ENCODE measurements at regions of chr12 and their contacts with region 1.

Region 1: GRCh38 chr12:9869307-9870161 is at the start of gene CLEC2B:
- DNase-seq: peak in 7 of 9 donors; percentile 54 to 71 (median 58)
- ATAC-seq: peak; percentile 83
- H3K4me3 ChIP-seq: peak within 1 kb of the TSS; percentile 68
- H3K4me3 Mint-ChIP-seq: peak within 1 kb of the TSS; percentile 87 to 99 (median 93)
- H3K27ac ChIP-seq: peak within 1 kb of the TSS; percentile 94
- H3K27ac Mint-ChIP-seq: peak within 1 kb of the TSS; percentile 97 to 100 (median 99)
- H3K4me1 ChIP-seq: peaks cover 7 to 14% of the 10 kb centered on the region in 2 donors
- H3K4me1 Mint-ChIP-seq: peaks cover 7 to 44% (median 29%) of the 10 kb centered on the region in 7 donors
- H3K27me3 ChIP-seq: no peaks in the 10 kb centered on the region
- H3K27me3 Mint-ChIP-seq: no peaks in the 10 kb centered on the region
- total RNA-seq, gene CLEC2B: 50.1 to 86.8 (median 73.8) TPM

Region 2: DNA sequence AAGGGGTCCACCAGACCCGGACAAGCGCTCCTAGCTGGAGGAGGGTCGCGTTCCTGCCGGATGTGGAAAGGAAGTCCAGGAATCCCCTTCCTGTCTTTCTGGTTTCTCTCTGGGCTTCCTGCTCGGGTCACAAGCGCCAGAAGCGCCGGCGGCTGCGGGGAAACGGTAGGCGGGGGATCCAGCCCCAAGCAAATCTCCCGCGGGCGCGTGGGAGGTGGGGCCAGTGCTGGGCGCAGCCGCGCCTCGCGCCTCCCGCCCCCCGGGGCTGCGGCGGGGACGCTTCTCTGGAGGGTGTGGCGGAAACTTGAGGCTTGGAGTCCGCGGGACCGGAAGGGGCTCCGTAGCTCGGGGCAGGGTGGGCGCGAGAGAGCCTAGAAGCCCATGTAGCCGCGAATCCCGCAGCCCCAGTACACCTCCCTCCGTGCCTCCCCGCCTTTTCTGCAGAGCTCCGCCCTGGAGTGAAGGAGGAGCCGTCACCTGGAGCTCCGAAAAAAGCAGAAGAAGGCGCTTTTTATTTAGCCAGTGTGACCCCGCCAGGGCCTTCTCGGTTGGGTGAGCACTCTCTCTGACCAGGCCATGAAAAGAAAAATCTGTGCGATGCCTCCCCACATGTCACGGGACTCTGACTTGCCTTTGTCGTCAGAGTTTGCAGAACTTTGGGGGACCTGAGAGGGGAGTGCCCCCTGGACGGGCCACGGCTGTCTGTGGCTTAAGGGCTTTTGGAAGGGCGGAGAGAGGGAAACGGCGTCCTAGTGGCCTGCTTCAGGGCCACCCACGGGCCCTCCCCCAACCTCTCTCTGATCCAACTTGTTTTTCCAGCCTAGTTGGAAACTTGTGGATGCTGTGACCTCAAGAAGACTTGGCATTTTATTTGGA is 221.5 kb before region 1 on chr12:
- CTCF ChIA-PET with region 1: no interaction called
- POLR2A ChIA-PET with region 1: interaction called, 17 read pairs
- intact Hi-C with region 1: loop called (anchors 2 to 5 kb)
- DNase-seq: peak; percentile 77 to 97 (median 92)
- ATAC-seq: peak; percentile 81
- H3K4me3 ChIP-seq: peak overlapping the region; percentile 67
- H3K4me3 Mint-ChIP-seq: peak overlapping the region; percentile 93 to 100 (median 98)
- H3K27ac ChIP-seq: peak overlapping the region; percentile 92
- H3K27ac Mint-ChIP-seq: peak overlapping the region; percentile 92 to 100 (median 98)
- H3K4me1 ChIP-seq: peaks cover 29 to 42% of the 10 kb centered on the region in 2 donors
- H3K4me1 Mint-ChIP-seq: peaks cover 32 to 65% (median 60%) of the 10 kb centered on the region in 7 donors
- H3K27me3 ChIP-seq: no peaks in the 10 kb centered on the region
- H3K27me3 Mint-ChIP-seq: peaks cover 0 to 5% (median 0%) of the 10 kb centered on the region in 5 donors

Region 3: GRCh38 chr12:9750276-9751203 is 119.0 kb before region 1 on chr12:
- CTCF ChIA-PET with region 1: interaction called, 9 read pairs
- POLR2A ChIA-PET with region 1: interaction called, 6 read pairs
- intact Hi-C with region 1: loop called in 1 of 2 experiments (anchors 2 kb)
- DNase-seq: peak in 8 of 9 donors; percentile 51 to 78 (median 72)
- ATAC-seq: peak; percentile 73
- H3K4me3 ChIP-seq: no peak overlapping the region
- H3K4me3 Mint-ChIP-seq: peak overlapping the region; percentile 5 to 87 (median 76)
- H3K27ac ChIP-seq: peak overlapping the region; percentile 67
- H3K27ac Mint-ChIP-seq: peak overlapping the region; percentile 54 to 97 (median 81)
- H3K4me1 ChIP-seq: peaks cover 26 to 33% of the 10 kb centered on the region in 2 donors
- H3K4me1 Mint-ChIP-seq: peaks cover 19 to 61% (median 53%) of the 10 kb centered on the region in 7 donors
- H3K27me3 ChIP-seq: no peaks in the 10 kb centered on the region
- H3K27me3 Mint-ChIP-seq: peaks cover 0 to 4% (median 0%) of the 10 kb centered on the region in 5 donors

Region 4: GRCh38 chr12:9851927-9852326 is 17.6 kb before region 1 on chr12:
- CTCF ChIA-PET with region 1: no interaction called
- POLR2A ChIA-PET with region 1: interaction called, 8 read pairs
- intact Hi-C with region 1: loop called in 1 of 2 experiments (anchors 2 kb)
- DNase-seq: no peak
- ATAC-seq: no peak
- H3K4me3 ChIP-seq: no peak overlapping the region
- H3K4me3 Mint-ChIP-seq: no peak overlapping the region
- H3K27ac ChIP-seq: no peak overlapping the region
- H3K27ac Mint-ChIP-seq: peak overlapping the region in 5 of 9 donors; percentile 12 to 63 (median 44)
- H3K4me1 ChIP-seq: no peaks in the 10 kb centered on the region
- H3K4me1 Mint-ChIP-seq: peaks cover 7 to 50% (median 34%) of the 10 kb centered on the region in 7 donors
- H3K27me3 ChIP-seq: no peaks in the 10 kb centered on the region
- H3K27me3 Mint-ChIP-seq: peaks cover 0 to 7% (median 0%) of the 10 kb centered on the region in 5 donors

Region 5: GRCh38 chr12:9906873-9907272 is 37.3 kb after region 1 on chr12:
- CTCF ChIA-PET with region 1: no interaction called
- POLR2A ChIA-PET with region 1: interaction called, 47 read pairs
- intact Hi-C with region 1: loop called (anchors 1 to 5 kb)
- DNase-seq: peak in 8 of 9 donors; percentile 26 to 68 (median 47)
- ATAC-seq: peak; percentile 96
- H3K4me3 ChIP-seq: no peak overlapping the region
- H3K4me3 Mint-ChIP-seq: peak overlapping the region; percentile 48 to 77 (median 68)
- H3K27ac ChIP-seq: peak overlapping the region; percentile 51
- H3K27ac Mint-ChIP-seq: peak overlapping the region; percentile 74 to 98 (median 83)
- H3K4me1 ChIP-seq: peaks cover 9 to 20% of the 10 kb centered on the region in 2 donors
- H3K4me1 Mint-ChIP-seq: peaks cover 16 to 45% (median 36%) of the 10 kb centered on the region in 7 donors
- H3K27me3 ChIP-seq: no peaks in the 10 kb centered on the region
- H3K27me3 Mint-ChIP-seq: peaks cover 0 to under 1% (median 0%) of the 10 kb centered on the region in 5 donors

Region 6: DNA sequence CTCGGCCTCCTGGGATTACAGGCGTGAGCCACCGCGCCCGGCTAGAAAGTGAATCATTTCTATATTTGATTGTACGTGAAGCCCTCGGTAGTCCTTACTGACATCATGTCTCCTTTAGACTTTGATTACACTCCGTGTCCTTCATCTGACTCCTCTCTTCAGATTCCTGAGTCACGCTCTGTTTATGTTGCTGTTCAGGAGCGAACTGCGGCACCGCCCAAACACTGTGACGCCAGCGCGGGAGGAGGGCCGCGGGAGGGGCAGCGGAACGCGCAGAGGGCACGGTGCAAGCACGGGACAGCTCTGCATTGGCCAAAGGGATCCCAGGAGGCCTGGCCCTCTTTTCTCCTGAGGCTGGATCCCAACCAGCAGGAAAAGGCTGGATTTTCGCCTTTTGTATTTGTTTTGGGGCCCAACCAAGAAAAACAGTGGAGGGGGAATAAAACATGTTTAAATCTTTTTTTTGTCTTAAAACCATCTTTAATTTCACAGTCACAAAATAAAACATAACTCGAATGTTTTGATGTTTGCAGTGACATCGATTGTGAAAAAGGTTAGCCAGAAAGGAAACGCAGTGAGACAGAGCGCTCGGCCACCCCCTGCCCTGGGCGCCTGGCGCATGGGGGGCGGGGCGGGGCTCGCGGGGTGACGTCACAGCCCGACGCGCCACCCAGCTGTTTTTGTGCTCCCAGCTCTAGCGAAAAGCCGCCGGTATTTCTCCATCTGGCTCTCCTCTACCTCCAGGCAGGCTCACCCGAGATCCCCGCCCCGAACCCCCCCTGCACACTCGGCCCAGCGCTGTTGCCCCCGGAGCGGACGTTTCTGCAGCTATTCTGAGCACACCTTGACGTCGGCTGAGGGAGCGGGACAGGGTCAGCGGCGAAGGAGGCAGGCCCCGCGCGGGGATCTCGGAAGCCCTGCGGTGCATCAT is 342.9 kb after region 1 on chr12 and contains the start of gene GABARAPL1:
- CTCF ChIA-PET with region 1: no interaction called
- POLR2A ChIA-PET with region 1: interaction called, 7 read pairs
- intact Hi-C with region 1: loop called (anchors 1 to 2 kb)
- DNase-seq: peak; percentile 77 to 90 (median 85)
- ATAC-seq: peak; percentile 85
- H3K4me3 ChIP-seq: peak within 1 kb of the TSS; percentile 91
- H3K4me3 Mint-ChIP-seq: peak within 1 kb of the TSS; percentile 94 to 98 (median 96)
- H3K27ac ChIP-seq: peak within 1 kb of the TSS; percentile 84
- H3K27ac Mint-ChIP-seq: peak within 1 kb of the TSS; percentile 91 to 99 (median 96)
- H3K4me1 ChIP-seq: peaks cover 12 to 22% of the 10 kb centered on the region in 2 donors
- H3K4me1 Mint-ChIP-seq: peaks cover 14 to 31% (median 25%) of the 10 kb centered on the region in 7 donors
- H3K27me3 ChIP-seq: no peaks in the 10 kb centered on the region
- H3K27me3 Mint-ChIP-seq: peaks cover 0 to 37% (median 0%) of the 10 kb centered on the region in 5 donors
- total RNA-seq, gene GABARAPL1: 3.7 to 165 (median 29.4) TPM